ENCODE measurements at regions of chr5 and their contacts with region 1.

Region 1: GRCh38 chr5:180071531-180072255 is at the start of gene RNF130:
- DNase-seq: peak; percentile 81 to 95 (median 88)
- H3K4me3 ChIP-seq: peak within 1 kb of the TSS; percentile 50 to 99 (median 94)
- H3K27ac ChIP-seq: peak within 1 kb of the TSS; percentile 85 to 99 (median 98)
- H3K27me3 ChIP-seq: no peaks in the 10 kb centered on the region
- CTCF ChIP-seq: peak in 22 of 56 donors; percentile 3 to 40 (median 20)
- total RNA-seq, gene RNF130: 95.0 to 273 (median 136) TPM

Region 2: DNA sequence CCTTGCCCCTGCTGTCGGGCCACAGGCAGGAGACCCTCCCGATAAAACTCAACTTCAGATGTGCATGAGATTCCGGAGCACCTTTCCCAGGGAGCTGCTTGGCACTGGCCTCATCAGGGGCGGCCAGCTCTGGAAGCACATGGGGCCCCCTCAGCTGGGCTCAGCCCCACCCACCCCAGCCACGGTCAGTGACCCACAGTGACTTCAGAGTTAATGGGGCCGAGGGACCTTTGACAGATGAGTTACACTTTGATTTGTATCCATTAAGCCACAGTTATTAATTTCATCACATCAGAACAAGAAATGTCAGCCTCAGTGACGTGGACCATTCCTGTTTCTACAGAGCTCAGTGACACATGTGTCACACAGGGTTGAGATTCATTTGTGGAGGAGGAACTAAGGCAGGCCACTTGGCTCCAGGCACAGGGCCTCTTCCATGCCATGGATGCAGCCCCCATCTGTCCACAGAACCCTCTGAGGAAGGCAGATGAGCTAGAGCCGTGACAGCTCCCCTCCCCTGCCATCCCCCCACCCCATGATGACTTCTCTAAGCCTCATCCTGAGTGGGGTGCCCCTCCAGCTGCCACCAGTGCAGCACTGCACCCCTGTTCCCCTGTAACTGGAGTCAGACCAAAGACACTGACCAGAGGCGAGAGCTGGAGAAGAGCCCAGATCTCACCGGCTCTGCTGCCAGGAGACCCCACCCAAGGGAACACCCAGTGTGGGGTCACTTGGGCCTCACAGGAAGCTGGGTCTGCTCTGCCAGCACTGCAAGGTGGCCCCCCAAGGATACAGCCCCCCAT is 657.0 kb before region 1 on chr5:
- intact Hi-C with region 1: no loop called
- DNase-seq: peak in 1 of 10 donors; percentile 13
- H3K4me3 ChIP-seq: no peak overlapping the region
- H3K27ac ChIP-seq: no peak overlapping the region
- H3K27me3 ChIP-seq: peaks cover 0 to 25% (median 0%) of the 10 kb centered on the region in 45 donors
- CTCF ChIP-seq: no peak

Region 3: GRCh38 chr5:179678223-179679013 is 393.3 kb before region 1 on chr5:
- intact Hi-C with region 1: loop called in 1 of 2 experiments (anchors 2 kb)
- DNase-seq: peak; percentile 92 to 96 (median 94)
- H3K4me3 ChIP-seq: peak overlapping the region; percentile 70 to 100 (median 92)
- H3K27ac ChIP-seq: peak overlapping the region; percentile 60 to 98 (median 91)
- H3K27me3 ChIP-seq: no peaks in the 10 kb centered on the region
- CTCF ChIP-seq: peak in 35 of 56 donors; percentile 9 to 57 (median 32)

Region 4: DNA sequence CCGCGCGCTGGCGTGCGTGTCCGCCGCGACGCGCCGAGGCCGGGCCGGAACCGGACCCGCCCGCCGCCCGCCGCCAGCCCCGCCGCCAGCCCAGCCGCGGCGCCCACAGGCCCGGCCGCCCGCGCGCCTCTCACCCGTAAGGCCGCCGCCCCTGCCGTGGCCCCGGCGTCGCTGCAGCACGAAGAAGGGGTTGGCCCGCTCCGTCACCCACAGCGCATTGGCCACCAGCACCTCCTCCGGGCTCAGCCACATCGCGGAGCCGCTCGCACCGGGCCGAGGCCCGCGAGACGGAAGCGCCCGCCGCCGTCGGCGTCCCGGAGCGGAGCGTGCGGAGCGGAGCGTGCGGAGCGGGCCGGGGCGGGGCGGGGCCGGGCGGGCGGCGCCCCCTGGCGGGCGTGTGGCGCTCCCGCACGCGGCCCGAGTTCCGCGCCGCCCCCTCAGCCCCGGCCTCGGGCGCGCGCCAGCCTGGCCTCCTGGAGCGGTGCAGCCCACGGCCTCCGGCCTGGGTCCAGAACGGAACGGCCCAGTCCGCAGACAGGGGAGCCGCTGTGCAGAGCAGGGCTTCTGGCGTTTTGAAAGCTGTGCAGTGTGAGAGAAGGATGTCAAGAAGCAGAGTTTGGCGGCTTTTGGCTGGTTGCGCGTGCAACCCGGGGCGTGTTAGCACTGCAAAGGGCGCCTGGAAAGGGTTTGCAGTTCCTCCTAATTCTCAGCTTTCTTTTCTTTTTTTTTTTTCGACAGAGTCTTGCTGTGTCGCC is 163.9 kb before region 1 on chr5 and contains the start of gene TBC1D9B:
- intact Hi-C with region 1: loop called (anchors 5 kb)
- DNase-seq: peak in 7 of 10 donors; percentile 43 to 76 (median 59)
- H3K4me3 ChIP-seq: peak within 1 kb of the TSS; percentile 38 to 82 (median 69)
- H3K27ac ChIP-seq: peak within 1 kb of the TSS; percentile 59 to 95 (median 86)
- H3K27me3 ChIP-seq: no peaks in the 10 kb centered on the region
- CTCF ChIP-seq: peak in 51 of 56 donors; percentile 8 to 66 (median 47)
- total RNA-seq, gene TBC1D9B: 127 to 231 (median 166) TPM

Region 5: GRCh38 chr5:179954434-179954833 is 117.3 kb before region 1 on chr5:
- intact Hi-C with region 1: no loop called
- DNase-seq: no peak
- H3K4me3 ChIP-seq: no peak overlapping the region
- H3K27ac ChIP-seq: peak overlapping the region in 18 of 59 donors; percentile 1 to 68 (median 30)
- H3K27me3 ChIP-seq: no peaks in the 10 kb centered on the region
- CTCF ChIP-seq: no peak

Region 6: DNA sequence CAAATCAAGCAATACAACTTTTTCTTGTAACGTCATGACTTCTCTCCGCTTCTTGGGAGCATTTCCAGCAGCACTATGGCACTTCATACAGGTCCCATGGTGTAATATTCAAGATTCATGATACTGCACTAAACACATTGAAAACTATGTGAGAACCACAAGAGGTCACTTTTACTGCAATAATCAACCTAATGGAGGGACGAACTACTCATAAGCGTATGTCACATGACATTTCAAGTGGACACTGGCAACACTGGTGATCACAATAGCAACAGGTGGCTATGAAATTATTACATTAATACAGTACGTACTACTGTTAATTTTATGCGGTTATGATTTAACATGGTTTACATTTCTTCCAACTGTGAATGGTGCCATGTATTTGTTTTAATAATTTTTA is 85.4 kb before region 1 on chr5:
- intact Hi-C with region 1: loop called in 1 of 2 experiments (anchors 5 kb)
- DNase-seq: no peak
- H3K4me3 ChIP-seq: no peak overlapping the region
- H3K27ac ChIP-seq: peak overlapping the region in 11 of 59 donors; percentile 5 to 49 (median 35)
- H3K27me3 ChIP-seq: no peaks in the 10 kb centered on the region
- CTCF ChIP-seq: peak in 49 of 56 donors; percentile 12 to 70 (median 44)

Region 7: GRCh38 chr5:180026320-180026719 is 45.4 kb before region 1 on chr5:
- intact Hi-C with region 1: loop called in 1 of 2 experiments (anchors 5 kb)
- DNase-seq: no peak
- H3K4me3 ChIP-seq: peak overlapping the region in 1 of 59 donors; percentile 7
- H3K27ac ChIP-seq: peak overlapping the region in 46 of 59 donors; percentile 3 to 76 (median 53)
- H3K27me3 ChIP-seq: no peaks in the 10 kb centered on the region
- CTCF ChIP-seq: no peak